ENCODE measurements at regions of chr6 and their contacts with region 1.

Region 1: GRCh38 chr6:13336553-13336952 is 8.2 kb upstream of the TBC1D7 start:
- DNase-seq: peak; percentile 52 to 80
- H3K4me3 ChIP-seq: no peak overlapping the region
- H3K27ac ChIP-seq: no peak overlapping the region
- H3K4me1 ChIP-seq: no peaks in the 10 kb centered on the region; the same call in 1 of the 2 replicates
- H3K27me3 ChIP-seq: no peaks in the 10 kb centered on the region
- CTCF ChIP-seq: peak; percentile 98

Region 2: GRCh38 chr6:12637960-12638641 is 698.5 kb before region 1 on chr6:
- CTCF ChIA-PET with region 1: no interaction called
- POLR2A ChIA-PET with region 1: no interaction called
- intact Hi-C with region 1: loop called (anchors 10 kb)
- DNase-seq: peak; percentile 36 to 63
- H3K4me3 ChIP-seq: no peak overlapping the region
- H3K27ac ChIP-seq: no peak overlapping the region
- H3K4me1 ChIP-seq: no peaks in the 10 kb centered on the region
- H3K27me3 ChIP-seq: peaks cover 13% of the 10 kb centered on the region
- CTCF ChIP-seq: peak; percentile 92

Region 3: GRCh38 chr6:13478525-13478966 is 142.0 kb after region 1 on chr6:
- CTCF ChIA-PET with region 1: no interaction called
- POLR2A ChIA-PET with region 1: no interaction called
- intact Hi-C with region 1: loop called (anchors 5 kb)
- DNase-seq: no peak
- H3K4me3 ChIP-seq: no peak overlapping the region
- H3K27ac ChIP-seq: no peak overlapping the region
- H3K4me1 ChIP-seq: peaks cover 51% of the 10 kb centered on the region
- H3K27me3 ChIP-seq: no peaks in the 10 kb centered on the region
- CTCF ChIP-seq: no peak

Region 4: GRCh38 chr6:13538084-13538483 is 201.5 kb after region 1 on chr6:
- CTCF ChIA-PET with region 1: interaction called, 10 read pairs
- POLR2A ChIA-PET with region 1: no interaction called
- intact Hi-C with region 1: loop called (anchors 1 kb)
- DNase-seq: peak in 1 of 2 experiments; percentile 46
- H3K4me3 ChIP-seq: no peak overlapping the region
- H3K27ac ChIP-seq: no peak overlapping the region
- H3K4me1 ChIP-seq: peaks cover 8% of the 10 kb centered on the region; the same call in 1 of the 2 replicates
- H3K27me3 ChIP-seq: no peaks in the 10 kb centered on the region
- CTCF ChIP-seq: peak; percentile 65

Region 5: DNA sequence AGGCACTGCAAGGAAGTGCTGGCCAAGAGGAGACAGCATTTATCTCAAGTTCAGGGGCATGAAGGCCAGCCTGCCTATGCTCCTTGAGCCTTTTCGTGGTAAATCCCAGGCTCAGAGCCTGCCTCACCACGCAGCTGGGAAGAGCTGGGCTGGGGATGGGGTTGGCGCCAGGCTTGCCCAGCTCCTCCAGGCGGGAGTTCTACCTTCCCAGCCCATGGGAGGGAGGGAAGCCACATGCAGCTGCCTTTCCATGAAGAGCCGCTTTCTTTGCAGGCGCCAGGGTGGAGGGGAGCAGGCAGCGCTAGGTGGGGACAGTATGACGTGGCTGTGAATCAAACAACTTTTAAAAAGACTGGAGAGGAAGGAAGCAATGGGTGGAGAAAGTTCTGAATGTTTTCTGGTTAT is 218.4 kb after region 1 on chr6:
- CTCF ChIA-PET with region 1: no interaction called
- POLR2A ChIA-PET with region 1: no interaction called
- intact Hi-C with region 1: no loop called
- DNase-seq: peak in 1 of 2 experiments; percentile 7
- H3K4me3 ChIP-seq: no peak overlapping the region
- H3K27ac ChIP-seq: no peak overlapping the region
- H3K4me1 ChIP-seq: peaks cover 14% of the 10 kb centered on the region
- H3K27me3 ChIP-seq: no peaks in the 10 kb centered on the region
- CTCF ChIP-seq: no peak

Region 6: GRCh38 chr6:13574149-13574570 is 237.6 kb after region 1 on chr6:
- CTCF ChIA-PET with region 1: interaction called, 3 read pairs
- POLR2A ChIA-PET with region 1: no interaction called
- intact Hi-C with region 1: loop called (anchors 1 kb)
- DNase-seq: peak; percentile 80 to 96
- H3K4me3 ChIP-seq: peak overlapping the region; percentile 92
- H3K27ac ChIP-seq: peak overlapping the region; percentile 96
- H3K4me1 ChIP-seq: peaks cover 17% of the 10 kb centered on the region
- H3K27me3 ChIP-seq: no peaks in the 10 kb centered on the region
- CTCF ChIP-seq: peak; percentile 52

Region 7: DNA sequence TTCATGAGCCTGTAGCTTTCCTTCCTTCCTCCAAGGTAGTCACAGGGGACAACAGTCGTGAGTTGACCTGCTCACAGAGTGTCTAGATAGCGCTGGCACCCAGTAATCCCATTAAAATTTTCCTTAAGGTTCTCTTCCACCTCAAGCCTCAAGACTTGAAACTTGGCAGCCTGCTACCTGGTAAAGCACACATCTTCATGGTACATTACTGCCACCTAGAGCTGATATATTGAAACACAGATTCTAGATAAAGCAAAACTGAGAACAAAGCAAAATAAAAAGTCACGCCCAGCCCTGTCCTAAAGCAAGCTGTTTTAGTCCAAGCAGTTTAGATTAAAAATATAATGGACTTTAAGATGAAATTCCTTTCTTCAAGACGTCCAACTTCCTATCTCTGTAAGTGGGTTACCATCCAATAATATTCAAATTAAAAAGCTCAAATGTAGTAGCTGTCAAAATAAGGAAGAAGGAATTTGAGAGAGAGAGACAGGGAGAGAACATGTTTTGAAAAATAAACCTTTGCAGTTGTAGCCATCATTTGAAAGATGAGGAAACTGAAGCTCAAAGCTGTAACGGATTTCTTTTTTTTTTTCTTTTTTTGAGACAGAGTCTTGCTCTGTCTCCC is 730.3 kb after region 1 on chr6:
- CTCF ChIA-PET with region 1: no interaction called
- POLR2A ChIA-PET with region 1: no interaction called
- intact Hi-C with region 1: loop called (anchors 5 kb)
- DNase-seq: peak in 1 of 2 experiments; percentile 57
- H3K4me3 ChIP-seq: no peak overlapping the region
- H3K27ac ChIP-seq: no peak overlapping the region
- H3K4me1 ChIP-seq: peaks cover 26% of the 10 kb centered on the region
- H3K27me3 ChIP-seq: no peaks in the 10 kb centered on the region
- CTCF ChIP-seq: peak; percentile 86